ENCODE measurements at regions of chr12 and their contacts with region 1.

Region 1: GRCh38 chr12:72346363-72346944 is 74.3 kb downstream of the TRHDE start:
- DNase-seq: peak; percentile 88
- H3K4me3 Mint-ChIP-seq: no peak overlapping the region
- H3K27ac Mint-ChIP-seq: no peak overlapping the region
- H3K4me1 Mint-ChIP-seq: no peaks in the 10 kb centered on the region
- H3K27me3 Mint-ChIP-seq: no peaks in the 10 kb centered on the region
- CTCF ChIP-seq: peak; percentile 56

Region 2: DNA sequence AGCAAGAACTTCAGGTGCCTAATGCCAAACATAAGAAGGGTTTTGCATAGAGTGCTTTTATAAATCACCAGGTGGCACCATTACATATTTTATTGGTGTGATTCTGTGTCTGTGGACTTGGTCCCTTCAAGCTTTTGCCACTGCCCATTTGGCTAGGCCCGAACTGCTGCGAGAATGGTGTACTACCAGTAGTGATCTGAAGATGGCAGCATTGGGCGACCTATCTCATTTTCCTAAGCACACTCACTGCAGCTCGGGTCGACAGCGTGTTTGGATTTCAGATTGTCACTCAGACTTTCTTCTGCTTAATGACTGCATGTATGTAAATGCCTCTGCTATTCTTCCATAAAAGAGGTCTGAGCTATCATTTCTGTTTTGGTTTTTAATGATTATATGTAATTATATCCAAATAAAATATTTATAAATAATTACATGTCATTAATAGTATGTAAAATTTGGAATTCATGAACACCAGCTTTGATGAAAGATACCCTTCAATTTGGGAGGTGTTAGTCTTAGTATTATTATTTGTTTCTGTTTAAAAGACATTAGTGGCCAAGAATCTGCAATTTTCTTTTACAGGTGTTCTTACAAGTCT is 329.3 kb before region 1 on chr12:
- CTCF ChIA-PET with region 1: interaction called, 9 read pairs
- POLR2A ChIA-PET with region 1: no interaction called
- intact Hi-C with region 1: loop called (anchors 5 kb)
- DNase-seq: peak; percentile 80
- H3K4me3 Mint-ChIP-seq: no peak overlapping the region
- H3K27ac Mint-ChIP-seq: no peak overlapping the region
- H3K4me1 Mint-ChIP-seq: peaks cover 2% of the 10 kb centered on the region
- H3K27me3 Mint-ChIP-seq: peaks cover 16% of the 10 kb centered on the region
- CTCF ChIP-seq: peak; percentile 75

Region 3: DNA sequence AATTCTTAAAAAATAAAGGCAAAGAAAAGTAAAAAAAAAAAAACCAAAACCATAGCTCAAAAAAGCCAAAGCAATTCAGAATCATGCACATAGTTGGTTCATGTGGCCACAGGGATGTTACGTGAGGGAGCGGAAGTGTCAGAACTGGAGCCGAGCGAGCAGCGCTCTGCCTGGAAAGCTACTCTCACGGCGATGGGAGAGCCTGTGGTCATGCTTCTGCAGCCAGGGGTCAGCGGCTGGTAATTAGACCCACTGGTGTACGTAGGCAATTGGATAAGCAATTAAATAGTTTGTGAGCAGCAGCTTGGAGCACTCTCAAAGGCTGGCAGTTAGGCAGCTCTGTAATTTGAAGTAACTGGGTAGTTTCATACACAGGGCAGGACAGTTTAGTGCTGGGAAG is 16.2 kb before region 1 on chr12:
- CTCF ChIA-PET with region 1: interaction called, 11 read pairs
- POLR2A ChIA-PET with region 1: no interaction called
- intact Hi-C with region 1: no loop called
- DNase-seq: no peak
- H3K4me3 Mint-ChIP-seq: no peak overlapping the region
- H3K27ac Mint-ChIP-seq: no peak overlapping the region
- H3K4me1 Mint-ChIP-seq: no peaks in the 10 kb centered on the region
- H3K27me3 Mint-ChIP-seq: no peaks in the 10 kb centered on the region
- CTCF ChIP-seq: no peak

Region 4: GRCh38 chr12:72901685-72902084 is 555.2 kb after region 1 on chr12:
- CTCF ChIA-PET with region 1: no interaction called
- POLR2A ChIA-PET with region 1: no interaction called
- intact Hi-C with region 1: loop called (anchors 10 kb)
- DNase-seq: no peak
- H3K4me3 Mint-ChIP-seq: peak overlapping the region; percentile 52
- H3K27ac Mint-ChIP-seq: peak overlapping the region; percentile 80
- H3K4me1 Mint-ChIP-seq: peaks cover 9% of the 10 kb centered on the region
- H3K27me3 Mint-ChIP-seq: no peaks in the 10 kb centered on the region
- CTCF ChIP-seq: no peak

Region 5: DNA sequence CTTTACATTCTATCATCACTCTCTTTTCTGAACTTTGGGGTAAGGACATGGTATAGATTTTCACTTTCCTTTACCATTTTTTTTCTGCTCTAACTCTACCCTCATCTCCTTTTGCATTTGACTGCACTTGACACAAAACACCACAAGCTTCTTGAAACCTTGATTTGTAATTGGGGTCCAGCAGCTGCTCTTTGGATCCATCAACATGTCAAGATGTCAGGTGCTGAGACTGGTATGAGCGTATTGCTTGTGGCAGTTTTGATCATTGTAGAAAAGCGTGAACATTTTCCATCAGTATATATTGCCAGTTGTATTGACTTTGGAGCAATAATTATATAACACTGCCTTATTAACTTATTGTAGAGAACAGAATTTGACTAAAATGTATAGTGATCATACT is 764.4 kb after region 1 on chr12:
- CTCF ChIA-PET with region 1: no interaction called
- POLR2A ChIA-PET with region 1: no interaction called
- intact Hi-C with region 1: no loop called
- DNase-seq: no peak
- H3K4me3 Mint-ChIP-seq: no peak overlapping the region
- H3K27ac Mint-ChIP-seq: no peak overlapping the region
- H3K4me1 Mint-ChIP-seq: peaks cover 6% of the 10 kb centered on the region
- H3K27me3 Mint-ChIP-seq: no peaks in the 10 kb centered on the region
- CTCF ChIP-seq: no peak

Region 6: DNA sequence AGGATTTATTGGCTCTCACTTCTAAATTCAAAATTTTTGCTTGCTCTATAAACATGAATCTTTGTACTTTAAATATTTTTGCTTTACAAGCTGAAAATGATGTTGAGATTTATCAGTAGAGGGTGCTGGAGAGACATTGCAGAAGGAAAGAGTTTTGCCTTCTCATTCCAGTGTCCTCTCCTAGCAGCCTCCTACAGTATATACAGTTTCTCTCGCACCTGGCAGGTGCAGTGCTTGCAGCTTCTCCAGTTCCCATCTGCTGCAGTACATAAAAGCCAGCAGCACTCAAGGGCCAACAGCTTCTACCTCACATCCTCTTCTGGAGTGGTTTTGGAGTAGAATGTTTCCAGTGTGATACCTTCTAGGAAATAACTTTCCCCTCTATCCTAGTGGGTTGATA is 1589.4 kb after region 1 on chr12:
- CTCF ChIA-PET with region 1: interaction called, 4 read pairs
- POLR2A ChIA-PET with region 1: no interaction called
- intact Hi-C with region 1: loop called (anchors 1 kb)
- DNase-seq: peak; percentile 32
- H3K4me3 Mint-ChIP-seq: no peak overlapping the region
- H3K27ac Mint-ChIP-seq: no peak overlapping the region
- H3K4me1 Mint-ChIP-seq: no peaks in the 10 kb centered on the region
- H3K27me3 Mint-ChIP-seq: no peaks in the 10 kb centered on the region
- CTCF ChIP-seq: peak; percentile 41

Region 7: DNA sequence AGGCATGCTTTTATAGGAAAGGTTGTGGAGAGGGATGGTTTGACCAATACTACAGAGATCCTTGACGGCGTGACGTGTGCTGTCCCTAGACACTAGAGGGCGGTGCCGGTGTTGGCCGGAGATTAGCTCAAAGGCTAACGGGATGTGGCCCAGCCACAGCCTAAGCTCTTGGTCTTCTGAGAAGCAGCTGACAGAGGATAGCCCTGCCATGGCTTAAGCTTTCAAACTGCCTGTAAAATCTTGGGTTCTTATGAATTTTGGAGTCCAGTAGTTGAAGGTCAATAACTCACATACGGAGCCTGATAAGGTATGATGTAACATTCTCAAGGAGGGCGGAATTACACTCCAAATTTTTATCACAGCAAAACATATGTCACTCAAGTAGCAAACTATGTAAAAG is 1675.5 kb after region 1 on chr12:
- CTCF ChIA-PET with region 1: interaction called, 5 read pairs
- POLR2A ChIA-PET with region 1: no interaction called
- intact Hi-C with region 1: loop called (anchors 1 kb)
- DNase-seq: peak; percentile 68
- H3K4me3 Mint-ChIP-seq: no peak overlapping the region
- H3K27ac Mint-ChIP-seq: no peak overlapping the region
- H3K4me1 Mint-ChIP-seq: no peaks in the 10 kb centered on the region
- H3K27me3 Mint-ChIP-seq: no peaks in the 10 kb centered on the region
- CTCF ChIP-seq: peak; percentile 56

Region 8: GRCh38 chr12:74317078-74317601 is 1970.7 kb after region 1 on chr12:
- CTCF ChIA-PET with region 1: interaction called, 16 read pairs
- POLR2A ChIA-PET with region 1: no interaction called
- intact Hi-C with region 1: loop called (anchors 1 kb)
- DNase-seq: peak; percentile 62
- H3K4me3 Mint-ChIP-seq: no peak overlapping the region
- H3K27ac Mint-ChIP-seq: no peak overlapping the region
- H3K4me1 Mint-ChIP-seq: peaks cover 14% of the 10 kb centered on the region
- H3K27me3 Mint-ChIP-seq: no peaks in the 10 kb centered on the region
- CTCF ChIP-seq: peak; percentile 52